ENCODE measurements at regions of chr10 and their contacts with region 1.

Region 1: DNA sequence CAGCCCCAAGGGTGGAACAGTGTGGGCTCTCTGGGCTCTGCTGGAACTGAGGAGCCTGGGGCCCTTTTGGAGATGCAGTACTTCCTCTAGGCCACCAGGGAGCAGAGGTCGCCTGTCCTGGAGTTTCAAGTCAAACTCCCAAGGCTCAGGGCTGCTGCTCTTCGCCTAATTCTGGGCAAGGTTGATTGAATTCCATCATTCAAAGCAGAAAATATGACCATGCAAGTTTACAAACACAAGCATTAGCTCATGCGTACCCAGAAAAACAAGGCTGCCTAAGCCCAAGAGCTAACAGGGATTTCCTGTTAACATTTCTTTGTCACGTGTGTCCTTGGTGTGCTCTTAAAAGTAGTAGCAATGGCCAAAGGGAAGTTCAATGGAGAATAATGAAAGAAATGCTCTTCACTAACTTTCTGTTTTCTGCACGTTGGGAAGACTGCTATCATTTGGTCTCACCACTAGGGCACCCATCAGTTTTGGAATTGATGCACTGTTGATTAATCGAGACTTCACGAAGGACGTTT is 20.1 kb downstream of the LDB3 start:
- H3K4me3 Mint-ChIP-seq: no peak overlapping the region
- H3K27ac Mint-ChIP-seq: no peak overlapping the region
- H3K4me1 Mint-ChIP-seq: peaks cover 13% of the 10 kb centered on the region
- H3K27me3 Mint-ChIP-seq: peaks cover 7% of the 10 kb centered on the region

Region 2: GRCh38 chr10:86899670-86900276 is 211.3 kb after region 1 on chr10:
- intact Hi-C with region 1: loop called (anchors 1 kb)
- H3K4me3 Mint-ChIP-seq: no peak overlapping the region
- H3K27ac Mint-ChIP-seq: no peak overlapping the region
- H3K4me1 Mint-ChIP-seq: no peaks in the 10 kb centered on the region
- H3K27me3 Mint-ChIP-seq: peaks cover 18% of the 10 kb centered on the region